AG04449 (cell line): ENCODE measurements at regions of chr11 and their contacts with region 1.

Region 1: GRCh38 chr11:60265373-60266214 is 14.9 kb upstream of the MS4A4A start:
- DNase-seq: no peak
- H3K4me3 ChIP-seq: no peak overlapping the region
- CTCF ChIP-seq: peak; percentile 35

Region 2: DNA sequence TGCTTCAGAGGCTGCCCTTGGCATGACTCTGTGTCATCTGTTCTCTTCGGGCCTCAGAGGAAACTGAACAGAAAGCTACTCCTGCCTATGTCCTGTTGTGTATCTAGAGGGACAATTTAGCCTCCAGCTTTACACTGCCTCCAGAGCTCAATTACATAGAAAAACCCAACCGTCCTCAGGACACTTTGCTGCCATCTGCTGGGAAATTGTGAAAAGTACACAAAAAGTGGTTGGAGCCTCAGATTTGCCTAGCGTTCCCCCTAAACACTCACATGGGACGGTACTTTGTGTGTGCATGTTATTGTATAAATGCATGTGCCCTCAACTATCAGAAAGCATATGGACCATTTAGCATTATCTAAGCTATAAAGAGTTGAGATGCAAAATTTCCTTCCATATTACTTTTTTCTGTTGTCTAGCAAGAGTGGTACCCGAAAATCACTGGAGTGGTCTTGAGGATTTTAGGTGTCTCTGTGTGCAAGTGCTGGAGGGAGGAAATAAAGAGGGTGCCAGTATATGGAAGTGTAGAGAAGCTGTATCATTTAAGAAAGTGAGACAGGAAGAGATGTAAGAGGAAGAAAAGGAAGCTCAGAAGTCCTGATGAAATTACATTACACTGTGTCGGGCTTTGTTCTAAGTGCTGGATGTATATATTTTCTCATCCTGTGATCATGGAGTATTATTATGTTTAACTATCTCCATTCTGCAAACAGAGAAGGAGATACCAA is 13.9 kb before region 1 on chr11:
- CTCF ChIA-PET with region 1: interaction called, 10 read pairs
- POLR2A ChIA-PET with region 1: no interaction called
- DNase-seq: no peak
- H3K4me3 ChIP-seq: no peak overlapping the region
- CTCF ChIP-seq: peak; percentile 26